Motor neuron (in vitro differentiated cells): ENCODE measurements at regions of chr19 and their contacts with region 1.

Region 1: GRCh38 chr19:35495107-35496064 is 5.1 kb upstream of the KRTDAP start:
- ATAC-seq: peak; percentile 87 to 98 (median 90)
- H3K4me3 ChIP-seq: no peak overlapping the region
- H3K27ac ChIP-seq: no peak overlapping the region
- H3K4me1 ChIP-seq: no peaks in the 10 kb centered on the region

Region 2: DNA sequence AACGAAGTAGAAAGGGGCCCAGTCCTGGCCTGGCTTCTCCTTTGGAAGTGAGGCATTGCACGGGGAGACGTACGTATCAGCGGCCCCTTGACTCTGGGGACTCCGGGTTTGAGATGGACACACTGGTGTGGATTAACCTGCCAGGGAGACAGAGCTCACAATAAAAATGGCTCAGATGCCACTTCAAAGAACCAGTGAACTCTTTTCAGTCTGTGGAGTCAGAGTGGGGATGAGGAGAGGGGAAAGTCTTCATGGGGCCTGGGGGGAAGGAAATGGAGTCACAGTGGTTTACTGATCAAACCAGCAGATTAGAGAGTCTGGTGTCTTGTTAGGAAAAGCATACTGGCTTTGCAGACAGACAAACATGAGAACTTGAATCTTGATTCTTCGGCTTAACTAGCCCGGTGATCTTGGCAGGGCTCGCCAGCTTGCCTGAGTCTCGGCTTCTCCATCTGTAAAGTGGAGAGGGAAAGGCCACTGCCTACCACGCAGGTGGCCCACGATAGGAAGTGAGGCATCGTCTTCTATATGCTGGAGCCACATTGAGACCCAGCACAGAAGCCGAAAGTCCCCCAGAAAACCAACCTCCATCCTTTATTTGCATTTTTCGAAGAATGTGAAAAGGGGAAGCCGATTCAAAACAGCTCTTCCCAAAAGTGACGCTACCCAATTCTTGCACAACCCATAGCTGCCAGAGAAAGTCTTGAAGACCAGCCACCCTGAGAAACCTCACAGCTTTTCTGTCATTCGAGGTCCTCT is 148.0 kb before region 1 on chr19 and contains the start of gene FFAR1:
- in situ Hi-C with region 1: loop called in 2 of 9 experiments (anchors 10 to 25 kb)
- ATAC-seq: no peak
- H3K4me3 ChIP-seq: no peak within 1 kb of the TSS
- H3K27ac ChIP-seq: no peak within 1 kb of the TSS
- H3K4me1 ChIP-seq: no peaks in the 10 kb centered on the region
- total RNA-seq, gene FFAR1: 0.08 to 0.43 (median 0.10) TPM in 4 of 8 experiments, not detected in the others

Region 3: GRCh38 chr19:35352448-35353304 is 142.7 kb before region 1 on chr19:
- in situ Hi-C with region 1: loop called in 2 of 9 experiments (anchors 10 to 25 kb)
- ATAC-seq: peak; percentile 75 to 93 (median 83)
- H3K4me3 ChIP-seq: no peak overlapping the region
- H3K27ac ChIP-seq: no peak overlapping the region
- H3K4me1 ChIP-seq: no peaks in the 10 kb centered on the region

Region 4: GRCh38 chr19:35633727-35634440 is 138.5 kb after region 1 on chr19:
- in situ Hi-C with region 1: no loop called
- ATAC-seq: no peak
- H3K4me3 ChIP-seq: no peak overlapping the region
- H3K27ac ChIP-seq: no peak overlapping the region
- H3K4me1 ChIP-seq: peaks cover 4 to 6% of the 10 kb centered on the region in 2 donors